ENCODE measurements at regions of chr1 and their contacts with region 1.

Region 1: GRCh38 chr1:154558575-154559465 is at the start of gene UBE2Q1:
- DNase-seq: peak; percentile 94
- H3K4me3 ChIP-seq: peak within 1 kb of the TSS; percentile 79
- CTCF ChIP-seq: no peak

Region 2: DNA sequence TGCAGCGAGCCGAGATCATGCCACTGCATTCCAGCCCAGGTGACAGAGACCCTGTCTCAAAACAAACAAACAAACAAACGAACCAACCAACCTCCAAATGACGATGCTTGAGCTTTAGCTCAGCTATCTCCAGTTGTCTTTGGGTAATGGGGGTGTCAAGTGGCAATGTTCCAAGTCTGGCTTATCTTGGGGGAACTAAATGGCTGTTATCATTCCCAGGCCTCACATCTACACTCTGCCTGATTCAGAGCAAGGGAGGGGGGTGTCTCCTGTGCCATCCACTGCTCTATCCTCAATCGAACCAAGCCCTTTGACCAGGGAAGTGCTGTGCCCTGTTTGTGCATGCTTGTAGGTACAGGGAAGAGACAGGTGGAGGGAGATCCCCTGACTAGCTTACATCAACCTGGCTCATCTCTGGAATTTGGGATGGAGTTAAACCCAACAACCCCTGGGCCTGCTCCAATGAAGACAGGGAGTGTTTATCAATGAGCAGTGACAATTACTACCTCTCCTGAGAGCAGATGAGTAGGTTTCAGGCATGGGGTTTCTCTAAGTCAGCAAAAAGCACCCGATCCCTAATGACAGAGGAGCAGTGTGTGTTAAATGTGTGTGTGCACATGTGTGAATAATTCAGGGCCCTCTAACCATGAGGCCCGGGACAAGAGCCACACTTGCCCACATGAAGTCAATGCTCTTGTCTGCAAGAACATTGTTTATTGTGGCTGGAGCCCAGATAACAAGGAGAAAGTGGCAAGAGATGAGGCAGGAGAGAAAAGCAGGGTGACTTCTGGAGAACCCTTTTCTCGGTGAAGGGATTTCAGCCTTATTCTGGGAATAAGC is 173.9 kb before region 1 on chr1:
- CTCF ChIA-PET with region 1: no interaction called
- POLR2A ChIA-PET with region 1: no interaction called
- DNase-seq: no peak
- H3K4me3 ChIP-seq: no peak overlapping the region
- CTCF ChIP-seq: no peak

Region 3: GRCh38 chr1:154479764-154480421 is 78.9 kb before region 1 on chr1:
- CTCF ChIA-PET with region 1: interaction called, 20 read pairs
- POLR2A ChIA-PET with region 1: no interaction called
- DNase-seq: no peak
- H3K4me3 ChIP-seq: no peak overlapping the region
- CTCF ChIP-seq: peak; percentile 79

Region 4: GRCh38 chr1:154574716-154575115 is 15.9 kb after region 1 on chr1:
- CTCF ChIA-PET with region 1: interaction called, 25 read pairs
- POLR2A ChIA-PET with region 1: no interaction called
- DNase-seq: no peak
- H3K4me3 ChIP-seq: no peak overlapping the region
- CTCF ChIP-seq: no peak

Region 5: GRCh38 chr1:154760469-154760933 is 201.7 kb after region 1 on chr1:
- CTCF ChIA-PET with region 1: interaction called, 22 read pairs
- POLR2A ChIA-PET with region 1: no interaction called
- DNase-seq: no peak
- H3K4me3 ChIP-seq: 0 out of 2 replicates have a peak overlapping the region, but pooled peaks have one; percentile 6
- CTCF ChIP-seq: peak; percentile 71

Region 6: DNA sequence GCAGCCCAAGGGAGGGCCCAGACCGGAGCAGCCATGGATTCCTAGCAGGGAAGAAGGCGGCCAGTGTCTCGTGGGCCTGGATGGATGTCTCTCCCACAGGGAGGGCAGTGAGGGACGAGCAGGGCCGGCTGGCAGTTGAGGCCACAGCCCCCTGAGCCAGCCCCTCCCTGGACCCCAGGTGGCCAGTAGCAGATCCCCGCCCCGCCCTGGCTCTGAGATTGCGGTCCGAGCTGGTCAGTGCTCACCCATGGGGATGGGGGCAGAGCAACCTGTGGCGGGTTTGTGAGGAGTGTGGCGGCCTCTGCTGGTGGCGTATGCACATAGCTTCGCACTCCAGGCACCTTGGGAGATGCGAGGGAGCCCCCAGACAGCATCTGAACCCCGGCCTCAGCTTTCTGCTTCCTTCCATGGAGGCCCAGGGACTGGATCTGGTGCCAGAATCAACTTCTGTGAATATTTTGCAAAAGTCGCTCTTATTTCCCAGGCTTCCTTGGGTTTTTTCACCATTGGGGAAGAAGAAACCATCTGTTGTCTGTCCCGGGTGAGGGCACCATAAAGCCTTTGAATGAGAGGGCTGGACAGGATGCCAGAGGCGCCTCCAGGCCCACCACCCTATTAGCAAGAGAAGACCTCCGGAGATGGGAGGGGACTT is 319.7 kb after region 1 on chr1:
- CTCF ChIA-PET with region 1: interaction called, 44 read pairs
- POLR2A ChIA-PET with region 1: no interaction called
- DNase-seq: no peak
- H3K4me3 ChIP-seq: no peak overlapping the region
- CTCF ChIP-seq: peak; percentile 94

Region 7: GRCh38 chr1:154992721-154993571 is 434.1 kb after region 1 on chr1:
- CTCF ChIA-PET with region 1: interaction called, 12 read pairs
- POLR2A ChIA-PET with region 1: no interaction called
- DNase-seq: no peak
- H3K4me3 ChIP-seq: no peak overlapping the region
- CTCF ChIP-seq: peak; percentile 40

Measured in AG04449 (cell line).